ENCODE measurements at regions of chr17 and their contacts with region 1.

Region 1: GRCh38 chr17:42467859-42468258 is 9.2 kb downstream of the ATP6V0A1 start:
- DNase-seq: no peak
- ATAC-seq: no peak
- H3K4me3 ChIP-seq: no peak overlapping the region
- H3K27ac ChIP-seq: no peak overlapping the region
- H3K4me1 ChIP-seq: peaks cover 4% of the 10 kb centered on the region
- H3K27me3 ChIP-seq: no peaks in the 10 kb centered on the region
- CTCF ChIP-seq: no peak
- POLR2A ChIP-seq: no peak
- RAD21 ChIP-seq: no peak

Region 2: GRCh38 chr17:42233941-42234340 is 233.9 kb before region 1 on chr17:
- CTCF ChIA-PET with region 1: no interaction called
- POLR2A ChIA-PET with region 1: no interaction called
- dilution Hi-C with region 1: no loop called
- in situ Hi-C with region 1: no loop called
- intact Hi-C with region 1: no loop called
- DNase-seq: no peak
- ATAC-seq: no peak
- H3K4me3 ChIP-seq: no peak overlapping the region
- H3K27ac ChIP-seq: no peak overlapping the region
- H3K4me1 ChIP-seq: no peaks in the 10 kb centered on the region; the same call in 1 of the 2 replicates
- H3K27me3 ChIP-seq: no peaks in the 10 kb centered on the region
- CTCF ChIP-seq: no peak
- POLR2A ChIP-seq: no peak
- RAD21 ChIP-seq: no peak

Region 3: GRCh38 chr17:42266918-42267778 is 200.7 kb before region 1 on chr17:
- CTCF ChIA-PET with region 1: no interaction called
- POLR2A ChIA-PET with region 1: no interaction called
- dilution Hi-C with region 1: no loop called
- in situ Hi-C with region 1: no loop called
- intact Hi-C with region 1: no loop called
- DNase-seq: peak; percentile 99
- ATAC-seq: peak; percentile 81
- H3K4me3 ChIP-seq: no peak overlapping the region
- H3K27ac ChIP-seq: peak overlapping the region; percentile 90; the same call in 1 of the 2 replicates
- H3K4me1 ChIP-seq: peaks cover 13% of the 10 kb centered on the region
- H3K27me3 ChIP-seq: no peaks in the 10 kb centered on the region
- CTCF ChIP-seq: no peak
- POLR2A ChIP-seq: no peak
- RAD21 ChIP-seq: no peak

Region 4: DNA sequence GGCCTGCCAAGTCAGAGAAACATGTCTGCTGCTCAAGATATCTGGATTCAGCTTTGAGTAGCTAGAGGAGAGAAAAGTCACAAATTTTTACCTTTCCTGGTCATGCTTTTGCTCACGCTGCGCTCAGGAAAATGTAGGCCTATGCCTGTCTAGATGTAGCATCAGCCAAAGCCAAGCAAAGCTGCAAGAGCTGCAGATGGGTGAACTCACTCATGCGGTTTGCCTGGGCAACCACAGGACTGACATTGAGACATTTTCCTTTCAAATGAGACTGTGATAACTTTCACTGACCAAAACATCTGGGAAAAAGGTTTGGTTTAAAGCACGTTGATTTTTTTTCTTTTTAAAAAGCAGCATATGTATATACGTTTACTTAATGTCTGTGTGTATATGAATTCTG is 34.2 kb after region 1 on chr17:
- CTCF ChIA-PET with region 1: no interaction called
- POLR2A ChIA-PET with region 1: no interaction called
- dilution Hi-C with region 1: no loop called
- in situ Hi-C with region 1: no loop called
- intact Hi-C with region 1: loop called (anchors 5 kb)
- DNase-seq: no peak
- ATAC-seq: no peak
- H3K4me3 ChIP-seq: no peak overlapping the region
- H3K27ac ChIP-seq: no peak overlapping the region
- H3K4me1 ChIP-seq: no peaks in the 10 kb centered on the region
- H3K27me3 ChIP-seq: no peaks in the 10 kb centered on the region
- CTCF ChIP-seq: no peak
- POLR2A ChIP-seq: no peak
- RAD21 ChIP-seq: no peak